ENCODE measurements at regions of chr1 and their contacts with region 1.

Region 1: DNA sequence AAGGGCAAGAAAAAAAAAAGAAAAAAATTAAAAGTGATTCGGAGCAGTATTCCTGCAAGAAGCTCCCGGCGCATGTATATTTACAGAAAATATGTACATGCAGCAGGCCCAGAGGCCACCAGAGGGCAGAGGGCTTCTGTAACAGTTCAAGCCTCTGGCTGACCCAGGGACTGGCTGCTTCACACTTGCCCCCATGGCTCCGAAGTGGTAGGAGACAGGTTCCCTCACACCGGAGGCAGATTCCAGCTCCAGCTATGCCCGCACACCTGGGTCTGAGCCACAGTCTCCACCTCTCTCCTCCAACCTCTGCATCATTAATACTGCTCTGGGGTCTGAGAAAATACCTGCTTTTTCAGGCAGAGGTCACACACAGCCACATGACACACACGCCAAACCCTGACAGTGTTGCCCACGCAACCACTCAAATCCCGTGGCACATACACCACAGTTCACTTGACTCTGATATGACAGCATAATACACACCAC is 2.2 kb upstream of the ARHGAP30 start:
- DNase-seq: peak; percentile 78
- H3K4me3 ChIP-seq: no peak overlapping the region
- H3K4me3 Mint-ChIP-seq: no peak overlapping the region
- H3K27ac Mint-ChIP-seq: no peak overlapping the region
- H3K4me1 ChIP-seq: no peaks in the 10 kb centered on the region
- H3K4me1 Mint-ChIP-seq: peaks cover 9% of the 10 kb centered on the region
- H3K27me3 ChIP-seq: no peaks in the 10 kb centered on the region
- H3K27me3 Mint-ChIP-seq: no peaks in the 10 kb centered on the region
- CTCF ChIP-seq: peak; percentile 74 to 82

Region 2: DNA sequence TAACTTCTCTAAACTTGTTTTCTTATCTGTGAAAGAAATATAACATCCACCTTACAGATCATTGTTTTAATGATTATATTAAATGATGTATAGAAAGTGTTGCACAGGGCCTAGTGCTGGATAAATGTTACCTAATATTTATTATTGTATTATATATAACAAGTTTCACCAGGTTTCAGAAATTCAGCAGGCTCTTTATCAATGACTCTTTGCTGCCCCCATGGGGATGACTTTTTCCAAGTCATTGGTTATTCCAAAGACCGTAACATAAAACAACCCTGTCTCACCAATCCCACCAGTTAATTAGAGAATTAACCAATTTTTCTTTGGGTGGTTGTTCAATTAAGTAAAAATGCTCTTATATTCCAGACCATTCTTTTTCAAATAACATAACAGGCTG is 67.8 kb after region 1 on chr1:
- CTCF ChIA-PET with region 1: interaction called, 3 read pairs
- POLR2A ChIA-PET with region 1: no interaction called
- intact Hi-C with region 1: loop called (anchors 1 kb)
- DNase-seq: peak in 1 of 2 experiments; percentile 71
- H3K4me3 ChIP-seq: no peak overlapping the region
- H3K4me3 Mint-ChIP-seq: no peak overlapping the region
- H3K27ac Mint-ChIP-seq: no peak overlapping the region
- H3K4me1 ChIP-seq: no peaks in the 10 kb centered on the region
- H3K4me1 Mint-ChIP-seq: peaks cover 17% of the 10 kb centered on the region
- H3K27me3 ChIP-seq: no peaks in the 10 kb centered on the region
- H3K27me3 Mint-ChIP-seq: no peaks in the 10 kb centered on the region
- CTCF ChIP-seq: peak; percentile 52 to 54

Measured in Caco-2 (cell line).